Posterior vena cava (tissue), 2 donors: ENCODE measurements at regions of chr15 and their contacts with region 1.

Region 1: DNA sequence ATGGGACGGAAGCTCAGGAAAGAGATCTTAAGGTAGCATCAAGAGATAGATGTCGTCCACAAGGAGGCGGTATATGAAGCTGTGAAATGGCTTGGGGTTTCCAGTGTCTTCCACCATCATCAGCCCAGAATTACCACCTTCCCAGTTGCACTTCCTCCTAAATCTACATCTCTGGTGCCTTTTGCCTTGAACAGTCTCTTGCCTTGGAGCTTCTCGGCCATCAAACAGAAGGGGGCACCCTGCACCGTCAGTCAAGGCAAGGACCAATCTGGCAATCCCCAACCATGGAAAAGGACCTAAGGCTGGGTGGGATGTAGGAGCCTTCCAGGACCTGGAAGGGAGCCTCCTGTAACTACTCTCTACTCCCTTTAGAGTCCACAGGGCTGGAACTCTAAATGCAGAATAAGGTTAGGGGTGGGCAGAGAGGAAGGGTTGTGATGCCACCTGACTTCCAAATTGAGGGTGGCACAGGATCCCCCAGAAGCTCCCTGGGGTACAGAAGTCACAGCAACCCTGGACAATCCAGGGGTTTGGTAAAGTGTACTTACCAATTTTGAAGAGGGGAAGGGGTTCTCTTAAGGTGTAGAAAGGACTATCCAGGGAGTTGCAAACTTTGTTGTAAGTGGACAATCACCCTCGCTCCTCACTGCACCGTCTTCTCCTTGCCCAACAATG is 1.0 kb upstream of the RYR3 start:
- DNase-seq: peak; percentile 83

Region 2: GRCh38 chr15:33132722-33133345 is 176.9 kb before region 1 on chr15:
- intact Hi-C with region 1: no loop called
- DNase-seq: no peak

Region 3: DNA sequence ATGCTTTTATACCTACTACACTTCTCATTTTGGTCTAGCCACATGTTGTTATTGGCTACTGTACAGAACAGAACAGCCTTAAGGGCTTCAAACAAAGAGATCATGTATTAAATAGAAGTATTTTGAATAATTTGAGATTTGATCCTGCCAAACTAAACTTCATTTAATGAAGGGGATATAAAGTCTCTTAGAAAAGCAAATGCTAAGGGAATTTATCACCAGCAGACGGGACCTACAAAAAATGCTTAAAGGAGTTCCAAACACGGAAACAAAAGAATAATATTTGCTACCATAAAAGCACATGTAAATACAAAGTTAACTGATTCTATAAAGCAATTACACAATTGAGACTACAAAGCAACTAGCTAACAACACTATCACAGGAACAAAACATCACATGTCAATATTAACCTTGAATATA is 91.7 kb before region 1 on chr15:
- intact Hi-C with region 1: no loop called
- DNase-seq: no peak

Region 4: DNA sequence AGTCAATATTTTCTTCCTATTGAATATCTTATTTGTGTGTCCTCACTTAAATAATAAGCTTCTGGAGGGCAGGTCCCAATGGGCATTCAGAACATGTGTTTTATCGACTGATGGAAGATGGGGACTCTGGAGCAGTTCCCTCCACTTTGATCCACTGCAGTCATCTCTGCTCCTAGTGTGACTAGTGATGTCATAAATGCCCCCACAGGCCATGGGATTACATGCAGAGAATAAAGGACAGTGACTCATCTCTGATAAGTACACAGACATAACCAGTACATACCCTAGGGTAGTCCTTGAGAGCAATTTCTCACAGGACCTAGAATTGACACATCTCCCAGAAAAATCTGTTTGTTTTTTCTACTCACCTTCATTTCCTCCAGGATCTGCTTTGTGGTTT is 65.9 kb before region 1 on chr15:
- intact Hi-C with region 1: no loop called
- DNase-seq: no peak

Region 5: DNA sequence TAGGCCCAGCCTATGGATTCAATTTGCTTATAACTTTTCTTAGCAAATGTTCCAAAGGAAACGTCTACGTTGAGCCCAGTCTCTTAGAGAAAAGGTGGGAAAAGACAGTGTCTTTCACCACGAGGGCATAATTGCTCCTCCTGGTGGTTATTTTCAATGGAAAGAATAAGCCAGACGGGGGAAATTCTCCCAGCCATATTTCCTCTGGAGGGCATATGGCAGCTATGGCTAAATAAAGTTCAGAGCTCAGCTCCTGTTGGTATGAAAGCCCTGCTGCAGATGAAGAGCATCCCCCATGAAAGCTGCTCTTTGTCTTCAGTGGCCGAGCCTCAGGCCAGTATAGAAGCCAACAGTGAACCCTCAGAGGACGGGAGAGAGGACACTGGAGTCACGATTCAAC is 299.0 kb after region 1 on chr15:
- intact Hi-C with region 1: loop called in 1 of 2 experiments (anchors 10 kb)
- DNase-seq: no peak